Calu3 (cell line): ENCODE measurements at regions of chr7 and their contacts with region 1.

Region 1: DNA sequence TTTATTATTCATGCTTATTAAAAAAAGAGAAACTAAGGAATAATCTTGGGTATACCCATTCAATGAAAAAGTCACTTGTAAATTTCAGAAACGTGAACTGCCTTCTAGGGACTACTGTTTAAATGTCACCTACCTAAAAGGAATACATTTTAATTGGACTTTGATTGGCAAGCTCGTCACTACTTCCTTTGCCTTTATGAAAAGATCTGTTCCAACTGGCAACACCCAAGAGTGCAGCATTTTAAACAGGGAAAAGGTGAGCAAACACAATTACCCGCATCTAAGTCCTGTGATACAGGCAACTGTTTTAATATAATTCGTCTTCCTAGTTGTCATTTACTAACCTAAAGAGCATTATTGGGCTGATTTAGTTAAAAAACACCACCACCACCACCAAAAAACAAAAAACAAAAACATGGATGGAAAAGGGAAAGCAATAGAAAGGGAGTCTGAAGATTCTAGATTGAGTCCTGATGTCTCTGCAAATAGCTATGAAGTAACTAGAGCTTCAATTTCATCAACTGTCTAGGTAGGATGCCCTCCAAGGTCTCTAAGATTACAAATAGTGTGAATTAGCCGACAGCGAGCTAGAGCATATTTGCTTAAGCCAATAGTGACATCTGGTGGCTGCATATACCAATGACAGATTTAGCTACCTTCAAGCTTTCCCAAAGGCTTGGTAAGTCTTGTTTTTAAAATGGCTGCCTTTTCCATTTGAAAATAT is 33.8 kb upstream of the ICA1 start:
- DNase-seq: peak; percentile 69
- H3K4me3 Mint-ChIP-seq: no peak overlapping the region
- H3K27ac Mint-ChIP-seq: no peak overlapping the region
- H3K4me1 Mint-ChIP-seq: peaks cover 27% of the 10 kb centered on the region
- H3K27me3 Mint-ChIP-seq: no peaks in the 10 kb centered on the region
- CTCF ChIP-seq: peak; percentile 84

Region 2: DNA sequence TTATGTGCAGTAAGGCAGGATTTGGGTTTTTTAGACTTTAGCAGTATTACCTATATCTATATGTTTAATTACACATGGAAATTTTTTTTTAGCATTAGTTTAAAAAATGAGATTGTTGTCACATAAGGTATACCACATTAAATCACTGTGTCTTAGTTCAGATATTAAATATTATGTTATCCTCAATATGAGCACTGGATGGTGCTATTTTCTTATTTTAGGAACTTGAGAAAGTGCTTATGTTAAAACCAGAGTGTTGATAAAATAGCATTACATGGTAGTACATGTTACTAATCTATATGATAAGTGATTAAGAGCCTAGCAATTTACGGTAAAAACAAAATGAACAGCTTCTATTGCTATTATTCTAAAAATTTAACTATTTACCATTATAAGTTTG is 700.3 kb before region 1 on chr7:
- CTCF ChIA-PET with region 1: interaction called, 3 read pairs
- intact Hi-C with region 1: loop called (anchors 2 kb)
- DNase-seq: no peak
- H3K4me3 Mint-ChIP-seq: no peak overlapping the region
- H3K27ac Mint-ChIP-seq: no peak overlapping the region
- H3K4me1 Mint-ChIP-seq: no peaks in the 10 kb centered on the region
- H3K27me3 Mint-ChIP-seq: no peaks in the 10 kb centered on the region
- CTCF ChIP-seq: peak; percentile 46

Region 3: DNA sequence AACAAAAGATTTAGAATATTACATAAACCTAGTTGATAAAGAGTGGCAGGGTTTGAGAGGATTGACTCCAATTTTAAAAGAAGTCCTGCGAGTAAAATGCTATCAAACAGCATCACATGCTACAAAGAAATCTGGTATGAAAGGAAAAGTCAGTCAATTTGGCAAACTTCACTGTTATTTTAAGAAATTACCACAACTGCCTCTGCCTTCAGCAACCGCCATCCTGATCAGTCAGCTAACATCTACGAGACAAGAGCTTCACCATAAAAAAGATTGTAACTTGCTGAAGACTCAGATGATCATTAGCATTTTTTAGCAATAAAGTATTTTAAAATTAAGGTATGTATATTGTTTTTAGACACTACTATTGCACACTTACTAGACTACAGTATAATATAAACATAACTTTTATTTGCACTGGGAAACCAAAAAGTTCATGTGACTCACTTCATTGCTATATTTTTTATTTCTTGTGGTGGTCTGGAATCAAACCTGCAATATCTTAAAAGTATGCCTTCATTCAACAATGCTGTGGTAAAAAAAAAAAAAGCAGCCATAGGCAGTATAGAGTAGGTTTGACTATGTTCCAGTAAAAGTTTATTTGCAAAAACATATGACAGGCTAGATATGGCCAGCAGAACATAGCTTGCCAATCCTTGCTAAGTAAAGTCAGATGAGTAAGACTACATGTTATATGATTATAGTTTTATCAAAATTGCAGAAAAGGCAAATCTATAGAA is 252.8 kb before region 1 on chr7:
- CTCF ChIA-PET with region 1: no interaction called
- intact Hi-C with region 1: loop called (anchors 10 kb)
- DNase-seq: no peak
- H3K4me3 Mint-ChIP-seq: no peak overlapping the region
- H3K27ac Mint-ChIP-seq: no peak overlapping the region
- H3K4me1 Mint-ChIP-seq: no peaks in the 10 kb centered on the region
- H3K27me3 Mint-ChIP-seq: no peaks in the 10 kb centered on the region
- CTCF ChIP-seq: no peak

Region 4: DNA sequence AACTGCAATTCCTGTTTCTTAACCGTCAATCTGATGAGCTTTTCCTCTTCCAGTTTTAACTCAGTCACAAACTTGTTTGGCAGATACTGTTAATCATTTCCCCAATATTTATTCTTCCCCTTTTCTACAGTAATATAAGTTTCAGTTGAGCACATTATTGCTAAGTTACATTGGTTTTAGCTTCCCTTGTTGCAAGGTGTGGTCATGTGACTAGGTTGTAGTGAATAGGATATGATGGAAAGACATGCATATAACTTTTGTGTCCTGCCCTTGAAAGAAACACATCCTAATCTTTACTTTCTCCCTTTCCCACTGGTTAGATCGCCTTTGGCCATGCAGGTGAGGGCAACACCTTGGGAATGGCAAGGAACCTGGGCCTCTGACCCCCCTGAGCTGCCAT is 27.0 kb before region 1 on chr7:
- CTCF ChIA-PET with region 1: interaction called, 10 read pairs
- intact Hi-C with region 1: no loop called
- DNase-seq: no peak
- H3K4me3 Mint-ChIP-seq: no peak overlapping the region
- H3K27ac Mint-ChIP-seq: no peak overlapping the region
- H3K4me1 Mint-ChIP-seq: peaks cover 13% of the 10 kb centered on the region
- H3K27me3 Mint-ChIP-seq: no peaks in the 10 kb centered on the region
- CTCF ChIP-seq: no peak

Region 5: DNA sequence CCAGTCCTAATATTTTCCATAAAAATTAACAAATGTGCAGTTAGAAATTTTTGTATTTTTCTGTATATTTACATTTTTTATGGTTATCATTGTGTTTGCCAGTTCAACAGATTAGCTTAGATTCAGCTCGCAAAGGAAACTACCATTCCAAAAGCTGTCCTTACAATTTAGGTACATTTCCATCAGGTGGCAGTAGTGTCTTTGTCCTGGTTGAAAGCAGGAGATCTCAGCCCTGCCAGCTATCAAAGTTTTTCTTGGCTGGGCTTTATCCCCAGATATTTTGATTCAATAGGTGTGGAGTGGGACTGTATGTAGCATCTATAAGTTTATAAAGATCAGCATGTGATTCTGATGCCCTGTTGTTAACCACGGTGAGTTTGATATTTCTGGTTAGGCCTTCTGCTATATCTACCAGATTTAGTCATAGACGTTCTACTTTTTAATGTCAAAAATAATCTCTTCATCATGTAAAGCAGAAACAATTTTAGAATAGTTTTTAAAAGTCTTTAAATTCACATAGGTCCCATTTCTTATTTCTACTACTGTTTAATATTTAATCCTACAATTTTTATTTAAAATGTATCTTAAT is 18.3 kb before region 1 on chr7:
- CTCF ChIA-PET with region 1: interaction called, 36 read pairs
- intact Hi-C with region 1: loop called (anchors 1 kb)
- DNase-seq: peak; percentile 44
- H3K4me3 Mint-ChIP-seq: no peak overlapping the region
- H3K27ac Mint-ChIP-seq: no peak overlapping the region
- H3K4me1 Mint-ChIP-seq: peaks cover 18% of the 10 kb centered on the region
- H3K27me3 Mint-ChIP-seq: no peaks in the 10 kb centered on the region
- CTCF ChIP-seq: peak; percentile 18